A549 (cell line): ENCODE measurements at regions of chr7 and their contacts with region 1.

Region 1: GRCh38 chr7:95476904-95477594 is 8.7 kb upstream of the ASB4 start:
- DNase-seq: peak; percentile 60 to 89
- ATAC-seq: peak; percentile 49 to 54; a peak in 4 of 6 replicates
- H3K4me3 ChIP-seq: no peak overlapping the region
- H3K27ac ChIP-seq: peak overlapping the region; percentile 92 to 94
- H3K4me1 ChIP-seq: peaks cover 40% of the 10 kb centered on the region
- CTCF ChIP-seq: peak; percentile 97
- EP300 ChIP-seq: no peak
- POLR2A ChIP-seq: no peak
- RAD21 ChIP-seq: peak; percentile 98

Region 2: GRCh38 chr7:94295850-94296249 is 1181.2 kb before region 1 on chr7:
- CTCF ChIA-PET with region 1: interaction called, 31 read pairs
- POLR2A ChIA-PET with region 1: no interaction called
- DNase-seq: peak; percentile 18 to 64
- ATAC-seq: peak; percentile 76 to 87; a peak in 5 of 6 replicates
- H3K4me3 ChIP-seq: no peak overlapping the region
- H3K27ac ChIP-seq: peak overlapping the region in 1 of 2 experiments; percentile 55; a peak in 3 of 6 replicates
- H3K4me1 ChIP-seq: peaks cover 38% of the 10 kb centered on the region
- CTCF ChIP-seq: peak; percentile 66
- EP300 ChIP-seq: no peak
- POLR2A ChIP-seq: no peak
- RAD21 ChIP-seq: peak; percentile 82 to 83

Region 3: GRCh38 chr7:95253986-95254385 is 223.1 kb before region 1 on chr7:
- CTCF ChIA-PET with region 1: interaction called, 17 read pairs
- POLR2A ChIA-PET with region 1: no interaction called
- DNase-seq: no peak
- ATAC-seq: no peak
- H3K4me3 ChIP-seq: no peak overlapping the region
- H3K27ac ChIP-seq: peak overlapping the region in 1 of 2 experiments; percentile 33; a peak in 1 of 6 replicates
- H3K4me1 ChIP-seq: peaks cover 19% of the 10 kb centered on the region
- CTCF ChIP-seq: no peak
- EP300 ChIP-seq: no peak
- POLR2A ChIP-seq: no peak
- RAD21 ChIP-seq: no peak

Region 4: GRCh38 chr7:95324431-95324830 is 152.6 kb before region 1 on chr7 and contains the start of gene PON1:
- CTCF ChIA-PET with region 1: interaction called, 13 read pairs
- POLR2A ChIA-PET with region 1: no interaction called
- DNase-seq: no peak
- ATAC-seq: no peak
- H3K4me3 ChIP-seq: 0 out of 3 replicates have a peak within 1 kb of the TSS, but pooled peaks have one; percentile 18
- H3K27ac ChIP-seq: peak within 1 kb of the TSS; percentile 86 to 87
- H3K4me1 ChIP-seq: peaks cover 26% of the 10 kb centered on the region
- CTCF ChIP-seq: no peak
- EP300 ChIP-seq: no peak
- POLR2A ChIP-seq: no peak
- RAD21 ChIP-seq: no peak
- polyA plus RNA-seq, gene PON1: 6.6 and 8.2 TPM in 2 replicates

Region 5: DNA sequence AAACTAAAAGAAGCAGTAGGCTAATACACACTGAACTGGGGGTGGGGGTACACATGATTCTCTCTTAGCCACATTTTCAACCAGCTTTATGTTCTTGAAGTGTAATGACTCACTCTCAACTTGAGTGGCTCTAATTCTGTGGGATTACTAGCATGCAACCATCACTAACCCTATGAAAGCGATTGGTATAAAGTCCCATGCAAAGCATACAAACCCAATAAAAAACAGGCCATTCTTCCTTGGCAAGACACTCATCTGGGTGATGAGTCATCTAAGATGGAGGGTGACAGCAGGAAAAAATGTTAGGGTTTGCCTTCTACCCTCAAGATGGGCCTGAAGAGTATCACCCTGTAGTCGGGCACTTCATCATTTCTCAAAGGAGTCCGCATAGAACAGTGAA is 66.0 kb before region 1 on chr7:
- CTCF ChIA-PET with region 1: interaction called, 39 read pairs
- POLR2A ChIA-PET with region 1: interaction called, 4 read pairs
- DNase-seq: peak in 1 of 2 experiments; percentile 57
- ATAC-seq: peak; percentile 60 to 63
- H3K4me3 ChIP-seq: no peak overlapping the region
- H3K27ac ChIP-seq: peak overlapping the region; percentile 0 to 63; a peak in 4 of 6 replicates
- H3K4me1 ChIP-seq: peaks cover 86% of the 10 kb centered on the region
- CTCF ChIP-seq: no peak
- EP300 ChIP-seq: no peak
- POLR2A ChIP-seq: no peak
- RAD21 ChIP-seq: no peak

Region 6: GRCh38 chr7:95491634-95492320 is 14.7 kb after region 1 on chr7:
- CTCF ChIA-PET with region 1: interaction called, 87 read pairs
- POLR2A ChIA-PET with region 1: no interaction called
- DNase-seq: peak in 1 of 2 experiments; percentile 34
- ATAC-seq: peak; percentile 24 to 51; a peak in 3 of 6 replicates
- H3K4me3 ChIP-seq: no peak overlapping the region
- H3K27ac ChIP-seq: peak overlapping the region; percentile 19 to 75; a peak in 5 of 6 replicates
- H3K4me1 ChIP-seq: peaks cover 45% of the 10 kb centered on the region
- CTCF ChIP-seq: no peak
- EP300 ChIP-seq: no peak
- POLR2A ChIP-seq: no peak
- RAD21 ChIP-seq: no peak

Region 7: GRCh38 chr7:95549818-95550529 is 72.9 kb after region 1 on chr7:
- CTCF ChIA-PET with region 1: no interaction called
- POLR2A ChIA-PET with region 1: no interaction called
- DNase-seq: peak; percentile 74 to 75
- ATAC-seq: peak; percentile 85 to 92
- H3K4me3 ChIP-seq: no peak overlapping the region
- H3K27ac ChIP-seq: peak overlapping the region; percentile 67 to 69
- H3K4me1 ChIP-seq: peaks cover 25% of the 10 kb centered on the region
- CTCF ChIP-seq: no peak
- EP300 ChIP-seq: no peak
- POLR2A ChIP-seq: no peak
- RAD21 ChIP-seq: no peak

Region 8: GRCh38 chr7:95690367-95690947 is 213.4 kb after region 1 on chr7:
- CTCF ChIA-PET with region 1: interaction called, 124 read pairs
- POLR2A ChIA-PET with region 1: no interaction called
- DNase-seq: peak; percentile 6 to 73
- ATAC-seq: peak; percentile 74 to 79
- H3K4me3 ChIP-seq: peak overlapping the region; percentile 12; the same call in 1 of the 3 replicates
- H3K27ac ChIP-seq: peak overlapping the region; percentile 27 to 53; a peak in 3 of 6 replicates
- H3K4me1 ChIP-seq: peaks cover 23% of the 10 kb centered on the region; the same call in 2 of the 3 replicates
- CTCF ChIP-seq: peak; percentile 99
- EP300 ChIP-seq: no peak
- POLR2A ChIP-seq: no peak
- RAD21 ChIP-seq: peak; percentile 62 to 87